ENCODE measurements at regions of chr1 and their contacts with region 1.

Region 1: GRCh38 chr1:94805912-94806311 is 14.2 kb upstream of the SLC44A3 start:
- DNase-seq: peak; percentile 86
- H3K4me3 Mint-ChIP-seq: no peak overlapping the region
- H3K27ac Mint-ChIP-seq: no peak overlapping the region
- H3K4me1 Mint-ChIP-seq: peaks cover 12% of the 10 kb centered on the region
- H3K27me3 Mint-ChIP-seq: peaks cover 5% of the 10 kb centered on the region

Region 2: GRCh38 chr1:94045465-94046056 is 760.4 kb before region 1 on chr1:
- intact Hi-C with region 1: loop called (anchors 5 kb)
- DNase-seq: peak; percentile 77
- H3K4me3 Mint-ChIP-seq: peak overlapping the region; percentile 45
- H3K27ac Mint-ChIP-seq: no peak overlapping the region
- H3K4me1 Mint-ChIP-seq: peaks cover 6% of the 10 kb centered on the region
- H3K27me3 Mint-ChIP-seq: peaks cover 26% of the 10 kb centered on the region

Region 3: GRCh38 chr1:94061513-94062443 is 744.1 kb before region 1 on chr1:
- intact Hi-C with region 1: loop called (anchors 5 kb)
- DNase-seq: peak; percentile 76
- H3K4me3 Mint-ChIP-seq: no peak overlapping the region
- H3K27ac Mint-ChIP-seq: no peak overlapping the region
- H3K4me1 Mint-ChIP-seq: no peaks in the 10 kb centered on the region
- H3K27me3 Mint-ChIP-seq: peaks cover 22% of the 10 kb centered on the region

Region 4: GRCh38 chr1:94481473-94481933 is 324.4 kb before region 1 on chr1:
- intact Hi-C with region 1: loop called (anchors 1 kb)
- DNase-seq: peak; percentile 79
- H3K4me3 Mint-ChIP-seq: no peak overlapping the region
- H3K27ac Mint-ChIP-seq: no peak overlapping the region
- H3K4me1 Mint-ChIP-seq: no peaks in the 10 kb centered on the region
- H3K27me3 Mint-ChIP-seq: no peaks in the 10 kb centered on the region

Region 5: DNA sequence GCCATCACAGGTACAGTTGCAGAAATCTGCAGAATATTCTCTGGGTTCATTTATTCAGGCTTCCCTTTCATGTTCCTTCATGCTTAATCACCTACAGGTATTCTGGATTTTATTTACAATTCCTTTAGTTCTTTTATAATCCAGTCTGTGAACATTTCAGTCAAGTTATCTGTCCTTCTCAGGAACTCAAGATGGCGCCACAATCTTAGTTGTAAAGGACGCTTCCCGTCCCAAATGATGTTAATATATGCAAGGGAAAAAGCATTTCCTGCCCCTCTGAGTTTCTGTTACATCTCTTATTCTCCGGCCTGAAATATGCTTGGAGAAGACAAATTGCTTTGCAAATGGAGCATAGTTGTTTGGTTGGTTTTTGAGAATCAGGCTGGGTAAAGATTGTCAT is 283.6 kb before region 1 on chr1:
- intact Hi-C with region 1: loop called (anchors 5 kb)
- DNase-seq: no peak
- H3K4me3 Mint-ChIP-seq: no peak overlapping the region
- H3K27ac Mint-ChIP-seq: no peak overlapping the region
- H3K4me1 Mint-ChIP-seq: no peaks in the 10 kb centered on the region
- H3K27me3 Mint-ChIP-seq: peaks cover 10% of the 10 kb centered on the region

Region 6: DNA sequence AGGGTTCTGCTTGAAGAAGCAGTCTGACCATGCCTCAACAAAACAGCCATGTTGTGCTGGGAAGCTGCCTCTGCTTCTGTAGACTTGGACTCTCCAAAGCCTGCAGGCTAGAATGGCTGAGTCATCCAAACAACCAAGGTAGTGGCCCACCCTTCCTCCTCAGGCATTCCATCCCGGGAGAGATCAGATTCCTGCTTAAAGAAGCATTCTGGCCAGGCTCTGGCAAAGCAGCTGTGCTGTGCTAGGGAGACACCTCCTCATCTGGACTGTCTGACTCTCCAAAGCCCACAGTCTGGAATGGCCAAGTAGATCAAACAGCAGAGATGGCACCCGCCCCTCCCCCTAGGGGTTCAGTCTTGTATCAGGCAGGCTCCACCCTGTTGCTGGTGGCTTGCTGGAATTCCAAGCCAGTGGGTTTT is 226.0 kb before region 1 on chr1:
- intact Hi-C with region 1: no loop called
- DNase-seq: no peak
- H3K4me3 Mint-ChIP-seq: no peak overlapping the region
- H3K27ac Mint-ChIP-seq: no peak overlapping the region
- H3K4me1 Mint-ChIP-seq: no peaks in the 10 kb centered on the region
- H3K27me3 Mint-ChIP-seq: peaks cover 10% of the 10 kb centered on the region

Region 7: DNA sequence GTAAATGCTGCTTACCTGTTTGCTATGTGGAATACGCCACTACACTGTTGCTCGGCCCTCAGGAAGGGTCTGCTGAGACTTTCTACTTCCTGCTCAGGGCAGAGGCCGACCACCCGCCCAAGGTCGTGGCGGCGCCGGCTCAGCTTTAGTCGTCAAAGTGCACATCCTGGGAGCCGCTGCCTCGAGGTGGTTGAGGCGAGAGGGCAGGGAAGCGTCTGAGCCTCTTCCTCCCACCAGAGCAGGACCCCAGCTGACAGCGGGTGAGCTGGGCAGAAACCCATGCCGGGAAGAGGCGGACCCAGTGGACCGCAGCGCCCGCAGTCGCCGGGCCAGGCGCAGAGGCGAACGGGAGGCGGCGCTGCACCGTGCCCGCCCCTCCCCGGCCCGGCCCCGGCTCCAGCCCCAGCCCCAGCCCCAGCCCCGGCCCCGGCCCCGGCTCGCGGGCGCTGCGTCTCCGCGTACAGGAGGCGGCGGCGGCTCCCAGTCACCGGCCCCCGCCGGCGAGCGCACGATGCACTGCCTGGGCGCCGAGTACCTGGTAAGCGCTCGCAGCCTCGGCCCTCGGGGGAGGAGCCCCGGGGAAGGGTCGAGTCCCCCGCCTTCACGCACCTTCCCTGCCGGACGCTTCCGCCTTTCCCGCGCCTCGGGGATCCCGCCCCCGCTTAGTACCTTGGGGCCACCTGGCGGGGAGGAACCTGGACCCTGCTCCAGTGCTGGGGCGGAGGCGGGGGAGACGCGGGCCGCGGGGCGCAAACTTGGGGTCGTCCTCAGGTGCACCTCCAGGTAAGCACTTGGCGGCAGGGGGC is 14.2 kb after region 1 on chr1 and contains the start of gene SLC44A3:
- intact Hi-C with region 1: no loop called
- DNase-seq: peak; percentile 65
- H3K4me3 Mint-ChIP-seq: peak within 1 kb of the TSS; percentile 57
- H3K27ac Mint-ChIP-seq: no peak within 1 kb of the TSS
- H3K4me1 Mint-ChIP-seq: peaks cover 2% of the 10 kb centered on the region
- H3K27me3 Mint-ChIP-seq: peaks cover 62% of the 10 kb centered on the region
- total RNA-seq, gene SLC44A3: not detected in 2 replicates

Measured in activated CD4-positive, alpha-beta T cell treated with anti-CD3 and anti-CD28 coated beads, Interleukin-2, amount 10 ng/mL, durations not matched to agents 24 days and 14 days (primary cell).